Adrenal gland (tissue), 19 donors: ENCODE measurements at regions of chr9 and their contacts with region 1.

Region 1: GRCh38 chr9:37920471-37921167 is 16.7 kb upstream of the SLC25A51 start:
- DNase-seq: no peak
- H3K4me3 ChIP-seq: no peak overlapping the region
- H3K27ac ChIP-seq: no peak overlapping the region
- H3K4me1 ChIP-seq: peaks cover 0 to 4% of the 10 kb centered on the region in 2 donors
- H3K27me3 ChIP-seq: no peaks in the 10 kb centered on the region
- CTCF ChIP-seq: no peak
- POLR2A ChIP-seq: no peak

Region 2: DNA sequence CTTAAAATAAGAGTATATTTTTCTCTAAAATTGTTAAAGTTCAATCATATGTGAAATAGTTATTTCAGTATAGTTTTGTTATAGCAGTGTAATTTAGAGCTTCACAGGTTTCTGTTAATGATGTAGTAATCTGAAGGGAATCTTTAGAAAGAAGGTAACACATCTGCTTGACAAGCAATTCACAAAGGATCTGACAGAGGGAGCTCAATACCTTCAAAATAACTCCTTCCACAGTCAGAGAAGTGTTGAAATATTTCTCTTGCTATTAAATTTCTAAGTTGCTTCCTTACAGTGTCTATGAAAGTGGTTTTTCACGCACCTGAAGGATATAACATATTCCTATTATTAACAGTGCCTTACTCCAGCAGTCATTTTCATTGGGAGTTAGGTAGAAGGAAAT is 61.6 kb before region 1 on chr9:
- intact Hi-C with region 1: no loop called
- DNase-seq: no peak
- H3K4me3 ChIP-seq: no peak overlapping the region
- H3K27ac ChIP-seq: no peak overlapping the region
- H3K4me1 ChIP-seq: no peaks in the 10 kb centered on the region
- H3K27me3 ChIP-seq: no peaks in the 10 kb centered on the region
- CTCF ChIP-seq: no peak
- POLR2A ChIP-seq: no peak

Region 3: GRCh38 chr9:37966412-37967271 is 46.0 kb after region 1 on chr9:
- intact Hi-C with region 1: loop called in 1 of 2 experiments (anchors 5 kb)
- DNase-seq: no peak
- H3K4me3 ChIP-seq: no peak overlapping the region
- H3K27ac ChIP-seq: no peak overlapping the region
- H3K4me1 ChIP-seq: peaks cover 12 to 30% of the 10 kb centered on the region in 2 donors
- H3K27me3 ChIP-seq: no peaks in the 10 kb centered on the region
- CTCF ChIP-seq: no peak
- POLR2A ChIP-seq: no peak

Region 4: DNA sequence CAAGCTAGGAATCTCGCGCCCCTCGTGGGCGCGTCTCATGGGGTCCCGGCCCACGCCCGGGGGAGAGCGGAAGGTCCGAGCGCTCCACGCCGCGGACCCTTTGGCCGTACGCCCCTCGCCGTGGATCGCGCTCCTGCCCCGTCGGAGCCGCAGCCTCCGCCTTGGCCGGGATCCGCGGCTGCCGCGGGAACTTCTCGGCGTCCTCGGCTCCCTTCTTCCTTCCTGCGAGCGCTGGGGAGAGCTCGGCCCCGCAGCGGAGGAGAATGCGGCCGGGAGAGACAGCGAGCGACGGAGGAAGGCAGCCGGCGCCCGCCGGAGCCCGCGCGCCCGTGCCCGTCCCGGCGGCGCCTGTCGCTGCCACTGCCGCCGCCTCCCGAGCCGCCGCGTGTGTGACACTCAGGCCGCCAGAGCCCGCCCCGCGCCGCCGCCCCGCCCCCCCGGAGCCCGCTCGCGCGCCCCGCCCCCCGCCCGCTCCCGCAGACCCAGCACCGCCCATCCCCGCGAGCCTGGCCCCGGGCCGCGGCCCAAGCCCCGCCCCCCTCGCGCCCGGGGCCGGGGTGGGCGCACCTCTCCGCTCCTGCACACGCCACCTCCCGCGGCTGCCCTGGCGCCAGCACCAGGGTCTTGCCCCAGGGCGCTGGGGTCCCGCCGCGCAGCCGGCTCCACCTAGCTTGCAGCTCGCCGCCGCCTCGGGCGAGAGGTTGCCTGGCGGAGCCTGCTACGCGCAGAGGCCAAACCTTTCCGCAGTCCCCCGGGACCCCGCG is 148.4 kb after region 1 on chr9 and contains the start of gene SHB:
- intact Hi-C with region 1: loop called (anchors 5 kb)
- DNase-seq: peak; percentile 71 to 84 (median 82)
- H3K4me3 ChIP-seq: peak within 1 kb of the TSS; percentile 44 to 83 (median 75)
- H3K27ac ChIP-seq: peak within 1 kb of the TSS in 4 of 5 donors; percentile 74 to 91 (median 86)
- H3K4me1 ChIP-seq: peaks cover under 1 to 38% of the 10 kb centered on the region in 2 donors
- H3K27me3 ChIP-seq: no peaks in the 10 kb centered on the region
- CTCF ChIP-seq: peak in 1 of 6 experiments; percentile 32
- POLR2A ChIP-seq: peak; percentile 77 to 86
- total RNA-seq, gene SHB: 3.2 to 21.2 (median 13.5) TPM